CD8-positive, alpha-beta T cell (primary cell): ENCODE measurements at regions of chrX and their contacts with region 1.

Region 1: DNA sequence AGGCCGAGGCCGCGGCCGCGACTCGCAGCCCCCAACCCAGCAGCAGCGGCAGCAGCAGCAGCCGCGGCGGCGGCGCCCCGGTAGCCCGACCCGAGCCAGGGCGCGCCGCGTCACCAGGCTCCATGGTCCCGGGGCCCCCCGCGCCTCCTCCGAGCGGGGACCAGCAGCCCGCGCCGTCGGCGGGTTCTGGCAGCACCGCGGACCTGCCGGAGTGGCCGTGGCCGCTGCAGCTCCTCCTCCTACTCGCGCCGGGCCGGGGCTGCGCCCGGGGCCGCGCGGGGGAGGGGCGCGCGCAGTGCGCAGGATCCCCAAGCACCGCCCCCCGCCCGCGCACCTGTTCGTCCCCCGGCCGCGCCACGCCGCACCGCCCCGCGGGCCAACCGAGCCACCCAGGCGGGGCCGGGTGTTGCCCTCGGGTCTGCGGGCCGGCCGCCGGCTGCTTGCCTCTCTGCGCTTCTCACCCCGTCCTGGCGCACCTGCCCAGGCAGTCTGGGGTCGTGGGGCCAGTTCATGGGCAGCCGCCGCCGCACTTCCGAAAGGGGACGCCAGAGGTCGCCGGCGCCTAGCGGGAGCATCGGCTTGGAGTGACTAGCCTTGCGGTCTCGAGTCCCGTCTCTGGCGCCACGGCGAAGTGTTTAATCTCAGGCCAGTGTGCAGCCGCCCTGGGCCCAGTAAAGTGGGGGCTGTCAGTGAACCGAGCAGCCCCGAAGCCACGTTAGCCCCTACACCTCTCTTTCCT is at the start of gene SLC9A7:
- DNase-seq: peak; percentile 56 to 86 (median 76)
- ATAC-seq: peak; percentile 84
- H3K4me3 ChIP-seq: peak within 1 kb of the TSS; percentile 52 to 67
- H3K4me3 Mint-ChIP-seq: peak within 1 kb of the TSS; percentile 90
- H3K27ac ChIP-seq: no peak within 1 kb of the TSS
- H3K27ac Mint-ChIP-seq: peak within 1 kb of the TSS; percentile 69
- H3K4me1 ChIP-seq: peaks cover 14% of the 10 kb centered on the region
- H3K4me1 Mint-ChIP-seq: peaks cover 11% of the 10 kb centered on the region
- H3K27me3 ChIP-seq: no peaks in the 10 kb centered on the region
- H3K27me3 Mint-ChIP-seq: peaks cover 8% of the 10 kb centered on the region
- CTCF ChIP-seq: peak; percentile 63
- total RNA-seq, gene SLC9A7: 2.4 to 2.5 TPM

Region 2: DNA sequence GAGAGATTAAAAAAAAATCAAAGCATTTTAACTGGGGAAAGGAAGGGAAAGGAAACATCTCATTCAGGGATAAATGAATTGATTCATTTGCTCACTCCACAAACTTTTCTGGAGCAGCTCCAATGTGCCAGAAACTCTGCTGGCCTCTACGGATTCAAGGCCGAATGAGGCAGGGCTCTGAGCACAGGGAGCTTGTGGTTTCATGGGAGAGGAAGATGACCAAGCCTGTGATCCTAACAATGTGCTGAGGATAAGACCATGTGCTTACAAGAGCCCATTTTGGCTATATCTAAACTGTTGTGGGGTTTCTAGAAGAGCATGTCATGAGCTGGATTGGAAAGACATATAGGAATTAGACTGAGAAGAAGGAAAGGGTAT is 351.3 kb before region 1 on chrX:
- CTCF ChIA-PET with region 1: no interaction called
- POLR2A ChIA-PET with region 1: no interaction called
- intact Hi-C with region 1: no loop called
- DNase-seq: no peak
- ATAC-seq: no peak
- H3K4me3 ChIP-seq: no peak overlapping the region
- H3K4me3 Mint-ChIP-seq: no peak overlapping the region
- H3K27ac ChIP-seq: no peak overlapping the region
- H3K27ac Mint-ChIP-seq: no peak overlapping the region
- H3K4me1 ChIP-seq: no peaks in the 10 kb centered on the region
- H3K4me1 Mint-ChIP-seq: no peaks in the 10 kb centered on the region
- H3K27me3 ChIP-seq: no peaks in the 10 kb centered on the region
- H3K27me3 Mint-ChIP-seq: no peaks in the 10 kb centered on the region
- CTCF ChIP-seq: no peak

Region 3: GRCh38 chrX:46796574-46797191 is 37.6 kb after region 1 on chrX:
- CTCF ChIA-PET with region 1: interaction called, 10 read pairs
- POLR2A ChIA-PET with region 1: no interaction called
- intact Hi-C with region 1: loop called (anchors 1 kb)
- DNase-seq: peak; percentile 25 to 70 (median 59)
- ATAC-seq: peak; percentile 49
- H3K4me3 ChIP-seq: no peak overlapping the region
- H3K4me3 Mint-ChIP-seq: no peak overlapping the region
- H3K27ac ChIP-seq: no peak overlapping the region
- H3K27ac Mint-ChIP-seq: no peak overlapping the region
- H3K4me1 ChIP-seq: no peaks in the 10 kb centered on the region
- H3K4me1 Mint-ChIP-seq: peaks cover 7% of the 10 kb centered on the region
- H3K27me3 ChIP-seq: no peaks in the 10 kb centered on the region
- H3K27me3 Mint-ChIP-seq: no peaks in the 10 kb centered on the region
- CTCF ChIP-seq: peak; percentile 61

Region 4: DNA sequence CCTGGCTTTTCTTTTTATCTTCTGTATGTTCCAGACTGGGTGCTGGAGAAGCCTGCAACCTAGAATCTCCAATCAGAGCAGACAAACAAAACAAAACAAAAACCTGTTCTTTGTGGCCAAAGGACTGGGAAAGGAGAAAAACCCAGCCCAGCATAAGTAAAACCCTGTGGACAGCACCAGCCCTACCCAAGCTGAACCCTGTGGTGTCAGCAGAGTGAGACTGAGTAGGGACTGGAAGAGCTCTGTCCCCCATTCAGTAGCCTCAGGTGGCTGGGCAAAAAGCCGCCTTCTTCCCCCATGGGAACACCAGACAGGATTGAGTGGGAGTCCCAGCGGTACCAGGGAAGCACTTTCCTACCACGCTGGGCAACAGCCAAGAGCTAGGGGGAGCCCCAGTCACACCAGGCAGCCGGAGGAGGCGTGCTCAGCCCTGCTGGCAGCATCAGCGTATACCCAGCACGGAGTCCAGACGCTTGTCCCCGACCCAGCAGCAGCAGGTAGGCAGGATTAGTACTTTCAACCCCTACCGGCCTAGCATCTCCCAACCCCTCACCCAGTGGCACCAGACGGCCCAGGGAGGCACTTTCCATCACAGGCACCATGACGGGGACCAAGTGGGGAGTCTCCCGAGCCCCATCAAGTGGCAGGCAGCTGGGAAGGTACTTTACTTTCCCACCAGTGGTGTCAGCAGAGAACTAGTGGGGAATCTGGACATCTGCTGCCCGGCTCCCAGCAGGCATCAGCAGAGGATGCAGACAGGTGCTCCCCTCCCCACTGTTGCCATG is 144.6 kb after region 1 on chrX:
- CTCF ChIA-PET with region 1: no interaction called
- POLR2A ChIA-PET with region 1: no interaction called
- intact Hi-C with region 1: loop called in 1 of 2 experiments (anchors 10 kb)
- DNase-seq: peak in 8 of 9 experiments; percentile 17 to 67 (median 45)
- ATAC-seq: peak; percentile 77
- H3K4me3 ChIP-seq: peak overlapping the region in 1 of 2 experiments; percentile 28
- H3K4me3 Mint-ChIP-seq: peak overlapping the region; percentile 39
- H3K27ac ChIP-seq: no peak overlapping the region
- H3K27ac Mint-ChIP-seq: no peak overlapping the region
- H3K4me1 ChIP-seq: peaks cover 5% of the 10 kb centered on the region
- H3K4me1 Mint-ChIP-seq: no peaks in the 10 kb centered on the region
- H3K27me3 ChIP-seq: no peaks in the 10 kb centered on the region
- H3K27me3 Mint-ChIP-seq: peaks cover 6% of the 10 kb centered on the region
- CTCF ChIP-seq: no peak

Region 5: DNA sequence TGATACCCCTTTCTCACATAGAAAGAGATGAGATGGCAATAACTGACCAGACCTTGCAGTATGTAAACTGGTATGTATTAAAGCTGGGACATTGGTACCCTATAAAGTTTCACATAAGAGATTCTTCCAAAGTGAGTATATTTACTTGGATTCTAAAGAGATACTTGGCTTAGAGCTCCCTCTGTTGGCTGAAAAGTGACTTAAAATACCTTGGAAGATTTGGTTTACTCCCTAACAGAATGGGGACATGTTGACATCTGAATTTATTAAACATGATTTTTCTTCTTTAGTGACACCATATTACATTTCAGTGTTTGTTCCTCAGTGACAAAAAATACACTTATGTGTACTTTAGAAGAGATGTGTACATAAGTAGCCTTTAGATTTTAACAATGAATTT is 271.3 kb after region 1 on chrX:
- CTCF ChIA-PET with region 1: interaction called, 4 read pairs
- POLR2A ChIA-PET with region 1: no interaction called
- intact Hi-C with region 1: loop called (anchors 1 kb)
- DNase-seq: peak in 3 of 9 experiments; percentile 11 to 57 (median 48)
- ATAC-seq: no peak
- H3K4me3 ChIP-seq: no peak overlapping the region
- H3K4me3 Mint-ChIP-seq: no peak overlapping the region
- H3K27ac ChIP-seq: no peak overlapping the region
- H3K27ac Mint-ChIP-seq: no peak overlapping the region
- H3K4me1 ChIP-seq: no peaks in the 10 kb centered on the region
- H3K4me1 Mint-ChIP-seq: no peaks in the 10 kb centered on the region
- H3K27me3 ChIP-seq: no peaks in the 10 kb centered on the region
- H3K27me3 Mint-ChIP-seq: no peaks in the 10 kb centered on the region
- CTCF ChIP-seq: peak; percentile 35

Region 6: GRCh38 chrX:47529548-47529947 is 770.5 kb after region 1 on chrX:
- CTCF ChIA-PET with region 1: no interaction called
- POLR2A ChIA-PET with region 1: no interaction called
- intact Hi-C with region 1: loop called in 1 of 2 experiments (anchors 5 kb)
- DNase-seq: no peak
- ATAC-seq: no peak
- H3K4me3 ChIP-seq: no peak overlapping the region
- H3K4me3 Mint-ChIP-seq: no peak overlapping the region
- H3K27ac ChIP-seq: no peak overlapping the region
- H3K27ac Mint-ChIP-seq: no peak overlapping the region
- H3K4me1 ChIP-seq: no peaks in the 10 kb centered on the region
- H3K4me1 Mint-ChIP-seq: no peaks in the 10 kb centered on the region
- H3K27me3 ChIP-seq: no peaks in the 10 kb centered on the region
- H3K27me3 Mint-ChIP-seq: no peaks in the 10 kb centered on the region
- CTCF ChIP-seq: no peak